PC-9 (cell line): ENCODE measurements at regions of chr12 and their contacts with region 1.

Region 1: DNA sequence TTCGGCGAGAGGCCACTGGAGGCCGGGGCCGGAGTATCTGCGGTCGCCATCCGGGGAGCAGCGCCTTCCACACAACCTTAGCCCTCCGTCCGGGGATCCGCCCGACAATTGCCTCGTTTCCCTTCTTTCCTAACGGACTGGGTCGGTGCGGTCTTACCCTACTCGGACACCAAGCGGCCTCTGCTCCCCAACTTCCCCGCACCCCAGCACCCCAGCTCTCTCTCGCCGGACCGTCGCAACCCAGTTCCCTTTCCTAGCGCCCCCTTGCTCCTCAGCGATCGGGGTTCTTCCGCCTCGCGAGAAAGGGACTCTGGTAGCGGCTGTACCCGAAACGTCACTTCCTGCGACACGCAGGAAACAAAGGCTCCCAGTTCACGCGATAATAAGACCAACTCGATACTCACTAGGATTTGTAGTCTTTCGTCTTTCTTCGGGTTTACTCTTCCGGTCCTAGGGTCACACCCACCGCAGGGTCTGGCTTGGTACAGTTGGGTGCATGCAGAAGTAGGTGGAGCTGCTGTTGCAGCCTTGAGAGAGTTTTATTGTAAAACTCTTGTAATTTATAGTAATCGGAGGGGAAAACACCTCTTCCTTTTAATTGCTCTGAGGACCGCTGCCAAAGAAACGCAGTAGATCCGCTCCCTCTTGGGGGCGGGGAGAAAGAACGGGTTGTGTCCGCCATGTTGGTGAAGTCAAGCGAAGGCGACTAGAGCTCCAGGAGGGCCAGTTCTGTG is at the start of gene ZFC3H1:
- DNase-seq: peak; percentile 87 to 98
- H3K4me3 ChIP-seq: peak within 1 kb of the TSS; percentile 70
- H3K27ac ChIP-seq: peak within 1 kb of the TSS; percentile 94
- H3K4me1 ChIP-seq: peaks cover 16% of the 10 kb centered on the region
- H3K27me3 ChIP-seq: no peaks in the 10 kb centered on the region
- CTCF ChIP-seq: no peak; the same call in 1 of the 2 replicates
- total RNA-seq, gene ZFC3H1: 47.4 and 53.4 TPM in 2 replicates

Region 2: GRCh38 chr12:71536939-71537622 is 126.6 kb before region 1 on chr12:
- CTCF ChIA-PET with region 1: no interaction called
- POLR2A ChIA-PET with region 1: interaction called, 11 read pairs
- intact Hi-C with region 1: no loop called
- DNase-seq: no peak
- H3K4me3 ChIP-seq: no peak overlapping the region
- H3K27ac ChIP-seq: no peak overlapping the region
- H3K4me1 ChIP-seq: no peaks in the 10 kb centered on the region
- H3K27me3 ChIP-seq: no peaks in the 10 kb centered on the region
- CTCF ChIP-seq: no peak

Region 3: GRCh38 chr12:71731751-71732712 is 68.3 kb after region 1 on chr12:
- CTCF ChIA-PET with region 1: no interaction called
- POLR2A ChIA-PET with region 1: no interaction called
- intact Hi-C with region 1: no loop called
- DNase-seq: no peak
- H3K4me3 ChIP-seq: no peak overlapping the region
- H3K27ac ChIP-seq: no peak overlapping the region
- H3K4me1 ChIP-seq: no peaks in the 10 kb centered on the region
- H3K27me3 ChIP-seq: no peaks in the 10 kb centered on the region
- CTCF ChIP-seq: no peak

Region 4: GRCh38 chr12:71754461-71755145 is 90.9 kb after region 1 on chr12 and contains the start of gene RAB21:
- CTCF ChIA-PET with region 1: interaction called, 3 read pairs
- POLR2A ChIA-PET with region 1: interaction called, 4 read pairs
- intact Hi-C with region 1: loop called (anchors 2 kb)
- DNase-seq: peak; percentile 93 to 96
- H3K4me3 ChIP-seq: peak within 1 kb of the TSS; percentile 69
- H3K27ac ChIP-seq: peak within 1 kb of the TSS; percentile 62
- H3K4me1 ChIP-seq: peaks cover 16% of the 10 kb centered on the region
- H3K27me3 ChIP-seq: peaks cover 7% of the 10 kb centered on the region; the same call in 1 of the 2 replicates
- CTCF ChIP-seq: peak; percentile 35; the same call in 1 of the 2 replicates
- total RNA-seq, gene RAB21: 37.6 and 47.2 TPM in 2 replicates

Region 5: GRCh38 chr12:71838676-71839075 is 174.9 kb after region 1 on chr12:
- CTCF ChIA-PET with region 1: no interaction called
- POLR2A ChIA-PET with region 1: no interaction called
- intact Hi-C with region 1: loop called (anchors 5 kb)
- DNase-seq: peak; percentile 27 to 85
- H3K4me3 ChIP-seq: peak overlapping the region; percentile 79
- H3K27ac ChIP-seq: peak overlapping the region; percentile 92
- H3K4me1 ChIP-seq: peaks cover 25% of the 10 kb centered on the region
- H3K27me3 ChIP-seq: no peaks in the 10 kb centered on the region
- CTCF ChIP-seq: no peak